GM10248 (cell line): ENCODE measurements at regions of chr3 and their contacts with region 1.

Region 1: GRCh38 chr3:15332405-15333098 is at the start of gene SH3BP5:
- DNase-seq: peak; percentile 88
- CTCF ChIP-seq: peak; percentile 74

Region 2: GRCh38 chr3:15284121-15284889 is 48.2 kb before region 1 on chr3:
- CTCF ChIA-PET with region 1: interaction called, 22 read pairs
- POLR2A ChIA-PET with region 1: no interaction called
- DNase-seq: no peak
- CTCF ChIP-seq: no peak

Region 3: GRCh38 chr3:15291589-15292541 is 40.7 kb before region 1 on chr3:
- CTCF ChIA-PET with region 1: interaction called, 22 read pairs
- POLR2A ChIA-PET with region 1: no interaction called
- DNase-seq: peak; percentile 69
- CTCF ChIP-seq: no peak

Region 4: DNA sequence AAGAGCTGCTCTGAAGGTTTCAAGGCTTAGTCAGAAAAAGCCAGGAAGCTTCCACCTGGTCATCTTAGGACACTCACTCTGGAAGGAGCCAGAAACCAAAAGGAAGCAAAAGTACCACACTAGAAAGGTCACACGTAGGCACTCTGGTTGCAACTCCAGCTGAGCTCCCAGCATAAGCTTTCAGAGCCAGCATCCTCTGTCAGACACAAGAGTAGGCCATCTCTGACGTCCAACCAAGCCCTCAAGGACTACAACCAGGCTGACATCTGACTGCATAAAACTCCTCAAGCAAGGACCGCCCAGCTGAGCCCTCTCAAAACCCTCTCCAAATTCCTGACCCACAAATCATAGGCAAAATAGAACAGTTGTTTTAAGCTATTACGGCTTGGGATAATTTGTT is 13.0 kb before region 1 on chr3:
- CTCF ChIA-PET with region 1: interaction called, 24 read pairs
- POLR2A ChIA-PET with region 1: no interaction called
- DNase-seq: no peak
- CTCF ChIP-seq: no peak

Region 5: GRCh38 chr3:15345608-15346137 is 13.1 kb after region 1 on chr3:
- CTCF ChIA-PET with region 1: interaction called, 61 read pairs
- POLR2A ChIA-PET with region 1: interaction called, 3 read pairs
- DNase-seq: peak; percentile 71
- CTCF ChIP-seq: no peak

Region 6: DNA sequence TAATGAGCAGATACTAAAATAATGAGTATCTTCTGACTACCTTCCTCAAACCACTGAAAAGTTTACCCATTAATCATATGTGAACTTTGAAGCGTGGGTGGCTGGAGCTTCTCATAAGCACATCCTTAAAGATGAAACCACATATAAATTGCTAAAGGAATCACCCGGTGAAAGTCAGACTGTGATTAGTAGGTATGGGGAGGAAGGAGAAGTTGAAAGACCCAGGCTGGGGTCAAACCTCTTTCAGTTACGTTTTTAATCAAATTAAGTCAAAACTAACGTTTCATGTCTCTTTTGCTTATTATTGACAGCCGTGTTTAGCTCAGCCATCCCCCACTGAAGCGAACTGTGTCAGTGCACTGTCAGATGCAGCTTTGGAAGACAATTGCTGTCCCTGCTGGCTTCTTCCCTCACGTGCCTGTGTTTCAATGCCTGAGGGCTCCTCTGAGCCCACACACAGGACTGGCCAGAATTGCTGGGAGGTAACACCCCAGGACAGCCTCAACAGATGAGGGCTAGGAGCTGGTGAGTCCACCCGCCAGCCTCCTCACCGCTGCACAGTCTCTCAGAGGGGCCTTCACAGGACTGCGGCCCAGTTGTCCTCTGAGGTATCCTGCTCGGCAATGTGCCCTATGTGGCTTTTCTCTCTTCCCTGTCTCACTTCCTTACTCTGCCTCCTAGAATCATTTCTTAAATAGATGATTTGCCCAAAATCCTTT is 29.1 kb after region 1 on chr3:
- CTCF ChIA-PET with region 1: interaction called, 13 read pairs
- POLR2A ChIA-PET with region 1: no interaction called
- DNase-seq: peak; percentile 83
- CTCF ChIP-seq: no peak

Region 7: DNA sequence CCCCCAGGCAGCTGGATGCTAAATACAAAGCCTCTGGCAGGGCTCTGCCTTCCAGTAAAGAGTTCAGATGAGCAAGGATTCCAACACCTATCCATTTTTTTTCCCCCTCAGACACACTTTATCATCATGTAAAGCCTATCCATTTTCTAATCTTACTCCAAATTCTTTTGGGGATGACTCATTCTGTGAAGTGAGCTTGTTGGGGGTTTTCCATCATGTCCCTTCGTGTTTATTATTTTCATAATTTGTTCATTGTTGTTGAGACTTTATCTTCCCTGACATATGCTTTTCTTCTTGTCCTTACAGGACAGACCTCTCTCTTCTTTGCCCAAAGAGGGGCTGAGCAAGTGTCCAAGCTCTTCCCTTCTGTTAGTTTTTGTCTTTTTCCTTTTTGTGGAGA is 34.5 kb after region 1 on chr3:
- CTCF ChIA-PET with region 1: interaction called, 13 read pairs
- POLR2A ChIA-PET with region 1: no interaction called
- DNase-seq: no peak
- CTCF ChIP-seq: no peak

Region 8: DNA sequence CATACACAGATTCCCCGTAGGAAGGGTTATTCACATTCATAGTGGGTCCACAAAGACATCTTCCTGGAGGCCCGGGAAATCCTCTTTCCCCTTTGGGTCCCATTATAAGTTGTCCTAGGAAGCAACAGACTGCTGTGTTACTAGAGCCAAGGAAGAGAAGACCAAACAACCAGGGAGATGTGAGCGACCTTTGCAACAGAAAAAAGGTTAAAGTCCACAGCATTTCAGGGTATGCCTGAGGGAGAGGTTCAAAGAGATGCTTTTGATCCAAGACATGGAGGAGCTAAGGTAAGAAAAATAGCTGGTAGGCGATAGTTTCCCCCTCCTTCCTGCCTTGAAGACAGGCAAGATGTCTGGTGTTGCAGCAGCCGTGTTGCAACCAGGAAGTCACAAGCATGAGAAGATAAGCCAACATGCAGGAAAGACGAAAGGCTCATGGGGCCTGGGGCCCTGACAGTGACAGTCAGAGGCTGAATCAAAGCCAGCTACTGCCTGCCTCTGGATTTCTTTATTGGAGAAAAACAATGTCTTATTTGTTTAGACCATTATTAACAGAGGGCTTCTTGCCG is 125.7 kb after region 1 on chr3:
- CTCF ChIA-PET with region 1: no interaction called
- POLR2A ChIA-PET with region 1: no interaction called
- DNase-seq: no peak
- CTCF ChIP-seq: no peak